H1 (cell line): ENCODE measurements at regions of chr9 and their contacts with region 1.

Region 1: DNA sequence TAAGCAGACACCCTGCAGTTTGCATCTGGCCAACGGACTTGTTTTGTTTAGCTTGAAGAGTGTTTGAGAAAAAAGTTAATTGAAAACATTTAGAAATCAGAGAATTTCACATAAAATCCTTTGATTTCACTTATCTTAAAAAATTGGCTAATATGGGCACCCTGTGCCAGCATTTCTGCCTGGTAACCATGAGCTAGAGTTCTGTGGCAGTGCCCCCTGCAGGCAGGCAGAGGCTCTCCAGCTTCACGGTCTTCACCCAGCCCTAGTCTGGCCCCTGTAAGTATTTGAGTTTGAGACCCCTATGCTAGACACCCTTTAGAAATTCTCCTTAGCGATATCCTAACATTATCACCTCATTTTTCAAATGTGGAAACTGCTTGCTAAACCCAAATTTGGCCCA is 18.8 kb upstream of the FANCC start:
- DNase-seq: no peak
- H3K4me3 ChIP-seq: no peak overlapping the region
- H3K27ac ChIP-seq: no peak overlapping the region
- H3K4me1 ChIP-seq: no peaks in the 10 kb centered on the region
- H3K27me3 ChIP-seq: no peaks in the 10 kb centered on the region; a peak in 1 of 7 replicates
- CTCF ChIP-seq: peak; percentile 75 to 90 (median 81)
- EP300 ChIP-seq: no peak
- POLR2A ChIP-seq: no peak
- RAD21 ChIP-seq: peak; percentile 55 to 72

Region 2: DNA sequence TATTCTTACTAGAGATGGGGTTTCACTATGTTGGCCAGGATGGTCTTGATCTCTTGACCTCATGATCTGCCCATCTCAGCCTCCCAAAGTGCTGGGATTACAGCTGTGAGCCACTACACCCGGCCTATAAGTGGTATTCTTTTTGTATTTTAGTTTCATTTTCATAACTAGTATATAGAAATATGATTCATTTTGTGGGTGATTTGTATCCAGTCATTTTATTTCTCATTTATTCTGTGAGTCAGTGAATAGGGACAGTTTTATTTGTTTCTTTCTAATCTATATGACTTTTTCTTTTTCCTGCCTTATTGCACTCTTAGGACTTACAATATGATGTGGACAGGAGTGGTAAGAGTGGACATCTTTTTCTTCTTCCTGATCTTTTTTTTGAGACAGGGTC is 496.9 kb before region 1 on chr9:
- CTCF ChIA-PET with region 1: no interaction called
- POLR2A ChIA-PET with region 1: no interaction called
- DNase-seq: no peak
- H3K4me3 ChIP-seq: no peak overlapping the region
- H3K27ac ChIP-seq: no peak overlapping the region
- H3K4me1 ChIP-seq: peaks cover 0 to 5% (median 0%) of the 10 kb centered on the region in 4 experiments; a peak in 1 of 7 replicates
- H3K27me3 ChIP-seq: no peaks in the 10 kb centered on the region
- CTCF ChIP-seq: no peak
- EP300 ChIP-seq: no peak
- POLR2A ChIP-seq: no peak
- RAD21 ChIP-seq: no peak

Region 3: DNA sequence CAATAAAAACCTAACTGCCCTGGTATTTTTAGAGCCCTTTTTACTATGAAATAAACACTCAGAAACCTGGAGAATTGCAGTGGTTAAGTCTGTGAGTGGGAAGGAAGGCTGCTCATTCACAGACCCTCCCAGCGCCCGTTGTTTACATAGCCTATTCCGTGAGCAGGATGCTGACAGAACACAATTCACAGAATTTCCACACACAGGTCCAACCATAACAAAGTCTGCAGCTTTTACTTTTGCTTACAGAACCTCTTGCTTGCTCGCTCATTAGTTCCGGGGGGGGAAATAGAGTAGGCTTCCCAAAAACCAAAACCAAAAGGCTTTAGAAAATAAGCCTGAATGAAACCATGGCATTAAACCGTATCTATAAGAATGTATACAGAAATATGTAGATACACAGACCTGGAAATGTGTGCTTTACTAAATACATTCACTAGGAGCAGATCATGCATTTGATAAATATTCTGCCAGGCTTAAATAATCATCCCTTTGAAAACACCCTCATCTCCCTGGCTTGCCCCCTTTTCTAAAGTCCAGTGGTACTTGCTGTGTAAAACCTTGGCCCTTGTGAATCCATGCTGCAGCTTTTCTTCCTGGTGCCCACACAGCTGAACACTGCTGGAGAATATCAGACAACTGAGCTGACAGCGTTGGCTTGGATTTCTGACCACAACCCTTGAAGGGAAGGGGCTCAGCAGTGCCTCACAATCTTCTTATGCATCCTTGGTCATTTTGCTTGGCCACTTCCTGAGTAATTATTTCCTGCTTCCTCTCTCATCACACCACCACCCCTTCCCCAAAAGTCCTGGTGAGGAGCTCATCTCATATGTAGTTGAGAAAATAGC is 146.8 kb before region 1 on chr9:
- CTCF ChIA-PET with region 1: interaction called, 23 read pairs
- POLR2A ChIA-PET with region 1: no interaction called
- DNase-seq: no peak
- H3K4me3 ChIP-seq: no peak overlapping the region
- H3K27ac ChIP-seq: no peak overlapping the region
- H3K4me1 ChIP-seq: no peaks in the 10 kb centered on the region; a peak in 1 of 7 replicates
- H3K27me3 ChIP-seq: no peaks in the 10 kb centered on the region
- CTCF ChIP-seq: no peak
- EP300 ChIP-seq: no peak
- POLR2A ChIP-seq: no peak
- RAD21 ChIP-seq: no peak

Region 4: DNA sequence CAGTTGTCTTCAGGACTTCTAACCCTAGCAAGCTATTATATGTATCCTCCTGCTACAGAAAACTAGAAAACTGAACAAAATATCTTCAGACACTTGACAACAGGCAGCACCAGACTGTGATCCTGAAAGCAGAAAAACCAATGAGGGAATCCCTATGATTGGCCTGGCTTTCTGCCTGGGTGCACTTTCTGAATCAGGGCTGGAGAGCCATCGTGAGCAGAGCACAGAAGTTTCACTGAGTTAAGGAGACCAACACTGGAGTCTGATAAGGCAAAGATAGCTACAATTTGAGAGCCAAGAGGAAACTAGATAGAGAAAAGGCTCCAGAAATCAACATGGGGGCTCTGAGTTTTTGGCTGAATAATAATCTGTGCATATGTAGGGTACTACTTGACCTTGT is 125.3 kb before region 1 on chr9:
- CTCF ChIA-PET with region 1: no interaction called
- POLR2A ChIA-PET with region 1: no interaction called
- DNase-seq: no peak
- H3K4me3 ChIP-seq: no peak overlapping the region
- H3K27ac ChIP-seq: no peak overlapping the region
- H3K4me1 ChIP-seq: peaks cover 0 to 6% (median 2%) of the 10 kb centered on the region in 4 experiments; a peak in 3 of 7 replicates
- H3K27me3 ChIP-seq: no peaks in the 10 kb centered on the region
- CTCF ChIP-seq: no peak
- EP300 ChIP-seq: no peak
- POLR2A ChIP-seq: no peak
- RAD21 ChIP-seq: no peak

Region 5: DNA sequence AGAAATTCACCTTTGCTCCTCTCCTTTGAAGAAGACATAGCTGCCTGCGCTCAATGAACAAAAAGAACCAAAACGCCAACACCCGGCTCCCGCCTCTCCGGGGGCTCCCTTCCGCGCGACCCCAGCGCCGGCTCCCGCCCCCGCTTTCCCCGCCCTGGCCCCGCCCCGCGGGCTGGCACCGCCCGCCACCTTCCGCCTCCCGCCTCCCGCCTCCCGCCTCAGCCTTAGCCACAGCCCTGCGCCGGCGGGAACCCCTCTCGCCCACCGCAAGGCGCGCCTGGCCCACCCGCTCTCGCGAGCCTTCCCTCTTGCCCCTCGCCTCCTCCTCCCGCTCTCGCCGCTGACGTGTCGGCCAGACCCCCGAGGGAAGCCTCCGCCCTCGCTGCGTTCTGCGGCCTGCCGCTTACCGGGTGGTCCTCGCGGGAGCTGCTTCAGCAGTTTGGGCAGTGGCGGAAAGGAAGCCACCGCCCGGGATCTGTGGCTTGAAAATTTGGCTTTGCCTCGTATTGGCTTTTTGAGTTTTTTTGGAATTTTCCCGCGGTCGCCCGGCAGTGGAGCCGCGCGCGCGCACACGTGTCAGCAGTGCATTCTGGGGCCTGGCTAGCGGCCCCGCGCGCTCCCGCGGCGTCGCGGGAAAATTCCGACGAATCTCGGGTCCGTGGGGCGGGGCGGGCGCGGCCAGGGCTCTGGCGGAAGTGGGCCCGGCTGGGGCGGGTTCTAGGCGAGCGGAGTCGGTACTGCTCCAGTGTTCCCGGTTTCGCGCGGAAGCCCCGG is 19.0 kb before region 1 on chr9 and contains the start of gene FANCC:
- CTCF ChIA-PET with region 1: interaction called, 19 read pairs
- POLR2A ChIA-PET with region 1: interaction called, 6 read pairs
- DNase-seq: peak; percentile 89 to 94
- H3K4me3 ChIP-seq: peak within 1 kb of the TSS; percentile 76 to 97 (median 80)
- H3K27ac ChIP-seq: peak within 1 kb of the TSS; percentile 96
- H3K4me1 ChIP-seq: peaks cover 0 to 4% (median 2%) of the 10 kb centered on the region in 4 experiments; a peak in 2 of 7 replicates
- H3K27me3 ChIP-seq: no peaks in the 10 kb centered on the region
- CTCF ChIP-seq: no peak
- EP300 ChIP-seq: no peak
- POLR2A ChIP-seq: peak; percentile 96
- RAD21 ChIP-seq: no peak
- total RNA-seq, gene FANCC: 15.2 and 15.4 TPM in 2 replicates

Region 6: GRCh38 chr9:95349091-95350038 is 13.1 kb after region 1 on chr9:
- CTCF ChIA-PET with region 1: interaction called, 26 read pairs
- POLR2A ChIA-PET with region 1: no interaction called
- DNase-seq: peak in 1 of 2 experiments; percentile 80
- H3K4me3 ChIP-seq: peak overlapping the region; percentile 52 to 69 (median 60)
- H3K27ac ChIP-seq: no peak overlapping the region
- H3K4me1 ChIP-seq: peaks cover 0 to 3% (median 1%) of the 10 kb centered on the region in 4 experiments; a peak in 4 of 7 replicates
- H3K27me3 ChIP-seq: peaks cover 12 to 37% (median 34%) of the 10 kb centered on the region in 4 experiments; a peak in 6 of 7 replicates
- CTCF ChIP-seq: no peak
- EP300 ChIP-seq: no peak
- POLR2A ChIP-seq: no peak
- RAD21 ChIP-seq: no peak

Region 7: GRCh38 chr9:95381233-95381632 is 45.0 kb after region 1 on chr9:
- CTCF ChIA-PET with region 1: interaction called, 10 read pairs
- POLR2A ChIA-PET with region 1: no interaction called
- DNase-seq: peak in 1 of 2 experiments; percentile 22
- H3K4me3 ChIP-seq: no peak overlapping the region
- H3K27ac ChIP-seq: no peak overlapping the region
- H3K4me1 ChIP-seq: no peaks in the 10 kb centered on the region; a peak in 1 of 7 replicates
- H3K27me3 ChIP-seq: no peaks in the 10 kb centered on the region
- CTCF ChIP-seq: no peak
- EP300 ChIP-seq: no peak
- POLR2A ChIP-seq: no peak
- RAD21 ChIP-seq: no peak